ENCODE measurements at regions of chr14 and their contacts with region 1.

Region 1: DNA sequence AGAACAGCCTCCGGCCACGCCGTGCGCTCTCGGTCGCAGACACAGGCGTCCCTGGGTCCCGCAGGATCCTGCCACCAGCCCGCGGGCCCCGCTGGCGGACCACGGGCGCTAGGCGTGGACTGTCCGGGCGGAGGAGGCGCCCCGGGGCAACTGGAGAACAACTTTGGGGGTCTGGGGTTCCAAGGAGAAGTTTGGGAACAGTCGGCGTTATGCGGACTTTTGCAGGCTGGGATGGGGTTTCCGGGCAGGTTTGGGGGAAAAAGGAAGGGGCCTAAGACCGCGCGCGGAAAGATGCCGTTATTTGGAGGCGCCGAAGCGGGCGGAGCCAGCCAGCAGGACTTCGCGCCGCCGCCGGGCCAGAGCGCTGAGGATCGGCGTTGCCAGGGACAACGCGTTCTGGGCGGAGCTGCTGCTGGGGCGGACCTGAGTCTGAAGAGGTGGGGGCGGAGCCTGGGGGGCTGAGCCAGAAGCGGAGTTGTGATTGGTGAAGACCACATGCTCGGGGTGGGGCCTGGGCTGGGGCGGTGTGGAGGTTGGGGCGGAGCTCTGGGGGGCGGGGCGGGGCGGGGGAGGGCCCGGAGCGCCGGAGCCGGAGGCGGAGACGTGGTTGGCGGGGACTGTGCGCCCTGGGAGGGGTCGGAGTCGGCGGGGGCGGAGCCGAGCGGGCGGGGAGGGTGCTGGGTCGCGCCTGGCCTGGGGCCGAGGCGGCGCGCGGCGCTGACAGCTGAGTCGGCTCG is at the start of gene CYP46A1:
- DNase-seq: peak; percentile 85 to 90
- H3K4me3 ChIP-seq: peak within 1 kb of the TSS; percentile 61
- H3K27ac ChIP-seq: no peak within 1 kb of the TSS
- H3K4me1 ChIP-seq: no peaks in the 10 kb centered on the region
- H3K27me3 ChIP-seq: peaks cover 12% of the 10 kb centered on the region; the same call in 1 of the 2 replicates
- CTCF ChIP-seq: no peak
- total RNA-seq, gene CYP46A1: not detected in 2 replicates

Region 2: GRCh38 chr14:99389174-99389826 is 294.5 kb before region 1 on chr14:
- CTCF ChIA-PET with region 1: no interaction called
- POLR2A ChIA-PET with region 1: no interaction called
- intact Hi-C with region 1: loop called (anchors 10 kb)
- DNase-seq: peak in 1 of 2 experiments; percentile 17
- H3K4me3 ChIP-seq: no peak overlapping the region
- H3K27ac ChIP-seq: no peak overlapping the region
- H3K4me1 ChIP-seq: no peaks in the 10 kb centered on the region
- H3K27me3 ChIP-seq: no peaks in the 10 kb centered on the region
- CTCF ChIP-seq: no peak; the same call in 1 of the 2 replicates

Region 3: GRCh38 chr14:99518441-99519346 is 165.1 kb before region 1 on chr14:
- CTCF ChIA-PET with region 1: no interaction called
- POLR2A ChIA-PET with region 1: no interaction called
- intact Hi-C with region 1: no loop called
- DNase-seq: peak; percentile 35 to 51
- H3K4me3 ChIP-seq: no peak overlapping the region
- H3K27ac ChIP-seq: no peak overlapping the region
- H3K4me1 ChIP-seq: no peaks in the 10 kb centered on the region
- H3K27me3 ChIP-seq: no peaks in the 10 kb centered on the region
- CTCF ChIP-seq: peak; percentile 84

Region 4: GRCh38 chr14:99884834-99885648 is 201.3 kb after region 1 on chr14:
- CTCF ChIA-PET with region 1: no interaction called
- POLR2A ChIA-PET with region 1: no interaction called
- intact Hi-C with region 1: loop called (anchors 2 kb)
- DNase-seq: no peak
- H3K4me3 ChIP-seq: no peak overlapping the region
- H3K27ac ChIP-seq: no peak overlapping the region
- H3K4me1 ChIP-seq: no peaks in the 10 kb centered on the region
- H3K27me3 ChIP-seq: no peaks in the 10 kb centered on the region
- CTCF ChIP-seq: peak; percentile 83

Measured in PC-9 (cell line).